A673 (cell line): ENCODE measurements at regions of chr15 and their contacts with region 1.

Region 1: GRCh38 chr15:90031231-90031791 is 30.2 kb downstream of the ZNF710 start:
- DNase-seq: peak; percentile 59
- H3K4me3 ChIP-seq: no peak overlapping the region
- H3K27ac ChIP-seq: peak overlapping the region; percentile 51
- H3K4me1 ChIP-seq: peaks cover 37% of the 10 kb centered on the region
- H3K27me3 ChIP-seq: no peaks in the 10 kb centered on the region
- CTCF ChIP-seq: no peak

Region 2: DNA sequence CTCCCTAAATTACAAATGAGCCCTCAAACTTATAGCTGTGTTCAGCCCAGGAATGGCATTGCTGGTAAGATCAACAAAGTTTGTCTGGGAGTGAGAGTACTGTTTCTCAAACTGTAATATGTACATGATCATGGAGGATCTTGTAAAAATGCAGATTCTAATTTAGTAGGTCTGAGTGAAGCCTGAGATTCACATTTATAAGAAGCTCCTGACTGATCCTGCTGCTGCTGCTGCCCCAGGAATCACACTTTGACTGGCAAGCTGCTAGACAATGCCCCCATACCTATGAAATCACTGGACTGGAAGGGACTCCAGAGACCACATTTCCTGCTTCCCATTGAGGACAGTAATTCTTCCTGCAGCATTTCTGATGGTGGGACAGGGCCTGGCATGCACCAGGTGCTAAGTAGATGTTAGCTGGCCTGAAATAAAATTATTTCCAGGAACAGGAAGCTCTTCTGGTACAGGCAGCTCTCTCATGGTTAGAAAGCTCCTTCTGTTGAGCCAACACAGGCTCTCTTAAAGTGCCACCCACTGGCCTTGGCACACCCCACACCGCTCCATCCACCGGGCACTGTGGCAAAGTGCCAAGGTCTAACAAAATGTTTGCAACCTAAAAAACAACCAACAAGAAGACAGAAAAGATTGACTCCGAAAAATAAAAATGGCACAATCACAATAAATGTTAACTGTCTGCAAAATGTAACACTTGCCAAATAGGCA is 66.9 kb before region 1 on chr15:
- CTCF ChIA-PET with region 1: no interaction called
- POLR2A ChIA-PET with region 1: interaction called, 14 read pairs
- intact Hi-C with region 1: no loop called
- DNase-seq: no peak
- H3K4me3 ChIP-seq: no peak overlapping the region
- H3K27ac ChIP-seq: no peak overlapping the region
- H3K4me1 ChIP-seq: no peaks in the 10 kb centered on the region
- H3K27me3 ChIP-seq: no peaks in the 10 kb centered on the region
- CTCF ChIP-seq: no peak